Heart right ventricle (tissue), 16 donors: ENCODE measurements at regions of chr5 and their contacts with region 1.

Region 1: DNA sequence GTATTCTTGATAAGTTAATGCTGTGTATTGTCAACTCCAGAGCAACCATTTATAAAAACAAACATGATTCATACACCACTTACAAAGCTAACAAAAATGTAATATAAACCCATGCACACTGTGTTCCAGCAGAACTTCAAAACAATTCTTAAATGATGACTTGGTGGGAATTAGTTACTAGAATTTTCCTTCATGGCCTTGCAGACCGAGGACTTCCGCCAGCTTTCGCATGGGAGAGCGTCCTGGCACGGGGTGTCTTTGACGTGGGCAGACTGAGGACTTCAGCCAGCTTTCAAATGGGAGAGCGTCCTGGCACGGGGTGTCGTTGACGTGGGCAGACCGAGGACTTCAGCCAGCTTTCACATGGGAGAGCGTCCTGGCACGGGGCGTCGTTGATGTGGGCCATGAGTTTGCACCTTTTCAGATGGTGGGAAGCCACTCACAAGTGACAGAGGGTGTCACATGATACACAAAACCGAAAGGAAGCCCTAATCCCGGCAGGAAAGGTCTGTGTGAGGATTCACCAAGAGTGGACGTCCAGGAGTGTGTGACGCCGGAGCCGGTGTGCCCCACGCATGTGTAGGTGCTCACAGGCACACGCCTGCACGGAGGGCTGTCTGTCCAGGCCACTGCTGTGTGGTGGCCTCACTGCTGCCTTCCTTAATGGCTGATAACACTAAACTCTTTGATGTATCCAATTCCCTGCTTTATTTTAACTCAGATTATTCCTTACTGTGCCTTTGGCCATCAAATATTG is 211.3 kb upstream of the IRX4 start:
- DNase-seq: peak in 1 of 2 donors; percentile 13
- ATAC-seq: peak in 6 of 8 donors; percentile 42 to 69 (median 58)
- H3K4me3 ChIP-seq: no peak overlapping the region
- H3K27ac ChIP-seq: peak overlapping the region in 3 of 10 donors; percentile 8 to 54 (median 39)
- H3K4me1 ChIP-seq: no peaks in the 10 kb centered on the region
- H3K27me3 ChIP-seq: peaks cover 0 to 6% (median 0%) of the 10 kb centered on the region in 7 donors
- CTCF ChIP-seq: no peak

Region 2: GRCh38 chr5:2143646-2144386 is 49.8 kb after region 1 on chr5:
- intact Hi-C with region 1: loop called in 1 of 10 experiments (anchors 2 kb)
- DNase-seq: no peak
- ATAC-seq: no peak
- H3K4me3 ChIP-seq: no peak overlapping the region
- H3K27ac ChIP-seq: no peak overlapping the region
- H3K4me1 ChIP-seq: no peaks in the 10 kb centered on the region
- H3K27me3 ChIP-seq: peaks cover 0 to 27% (median 3%) of the 10 kb centered on the region in 7 donors
- CTCF ChIP-seq: no peak